Activated T-helper 2 cell treated with anti-CD3 and anti-CD28 coated beads, Interferon-gamma antibody, Interleukin-2, Interleukin-4, amounts not matched to agents 10 μg/mL and 5 μg/mL and 100 μg/mL, durations not matched to agents 14 hours and 24 hours and 36 hours (primary cell): ENCODE measurements at regions of chr11 and their contacts with region 1.

Region 1: GRCh38 chr11:33015621-33016551 is at the start of gene DEPDC7:
- DNase-seq: peak; percentile 66
- H3K4me3 Mint-ChIP-seq: peak within 1 kb of the TSS; percentile 76
- H3K27ac Mint-ChIP-seq: no peak within 1 kb of the TSS
- H3K4me1 Mint-ChIP-seq: peaks cover 17% of the 10 kb centered on the region
- H3K27me3 Mint-ChIP-seq: peaks cover 56% of the 10 kb centered on the region
- total RNA-seq, gene DEPDC7: 0.57 and 0.82 TPM in 2 replicates

Region 2: DNA sequence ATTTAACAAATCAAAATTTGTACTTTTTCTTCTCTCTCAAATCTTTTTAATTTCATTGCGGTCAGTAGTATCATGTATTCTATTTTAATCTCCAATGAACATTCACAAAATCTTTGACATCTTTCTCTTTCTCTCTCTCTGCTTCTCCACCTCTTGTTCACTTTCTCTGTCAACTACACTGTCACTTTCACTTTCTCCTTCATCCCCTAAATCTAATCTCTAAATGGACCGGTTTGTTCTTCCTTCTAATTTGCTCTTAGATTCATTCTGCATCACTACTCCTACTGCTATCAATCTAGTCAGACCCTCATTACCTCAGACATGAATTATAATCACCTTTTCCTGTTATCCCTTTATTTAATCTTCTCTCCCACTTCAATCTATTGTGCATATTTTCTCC is 240.0 kb before region 1 on chr11:
- intact Hi-C with region 1: no loop called
- DNase-seq: no peak
- H3K4me3 Mint-ChIP-seq: no peak overlapping the region
- H3K27ac Mint-ChIP-seq: no peak overlapping the region
- H3K4me1 Mint-ChIP-seq: peaks cover 10% of the 10 kb centered on the region
- H3K27me3 Mint-ChIP-seq: no peaks in the 10 kb centered on the region

Region 3: DNA sequence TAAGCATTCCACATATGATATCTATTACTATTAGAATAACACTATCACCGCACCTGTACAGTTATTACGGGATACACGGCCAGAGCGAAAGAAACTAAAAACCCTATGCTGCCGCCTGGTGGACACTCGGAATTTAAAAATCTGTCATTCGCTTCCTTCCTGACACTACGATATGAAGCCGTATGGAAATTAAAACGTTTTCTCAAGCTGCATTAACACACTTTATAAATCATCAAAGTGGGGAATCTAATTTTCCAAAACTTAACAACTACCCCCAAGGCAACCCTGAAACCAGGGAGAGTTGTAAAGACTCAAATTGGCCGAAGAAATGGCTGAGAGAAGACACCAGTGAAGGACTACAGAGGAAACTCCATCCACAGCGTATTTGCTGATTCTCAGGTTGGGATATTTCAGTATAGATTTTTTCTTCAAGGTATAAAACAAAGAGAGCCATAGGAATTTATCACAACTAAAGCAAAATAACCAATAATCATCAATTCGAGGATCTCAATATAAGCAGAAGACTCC is 222.9 kb before region 1 on chr11:
- intact Hi-C with region 1: no loop called
- DNase-seq: peak; percentile 49
- H3K4me3 Mint-ChIP-seq: peak overlapping the region; percentile 13
- H3K27ac Mint-ChIP-seq: no peak overlapping the region
- H3K4me1 Mint-ChIP-seq: peaks cover 3% of the 10 kb centered on the region
- H3K27me3 Mint-ChIP-seq: peaks cover 27% of the 10 kb centered on the region

Region 4: GRCh38 chr11:32960553-32961164 is 55.2 kb before region 1 on chr11:
- intact Hi-C with region 1: loop called (anchors 2 kb)
- DNase-seq: no peak
- H3K4me3 Mint-ChIP-seq: no peak overlapping the region
- H3K27ac Mint-ChIP-seq: no peak overlapping the region
- H3K4me1 Mint-ChIP-seq: peaks cover 11% of the 10 kb centered on the region
- H3K27me3 Mint-ChIP-seq: no peaks in the 10 kb centered on the region

Region 5: GRCh38 chr11:33039274-33040032 is 23.6 kb after region 1 on chr11 and contains the start of gene TCP11L1:
- intact Hi-C with region 1: loop called (anchors 1 kb)
- DNase-seq: peak; percentile 74
- H3K4me3 Mint-ChIP-seq: peak within 1 kb of the TSS; percentile 91
- H3K27ac Mint-ChIP-seq: peak within 1 kb of the TSS; percentile 93
- H3K4me1 Mint-ChIP-seq: peaks cover 36% of the 10 kb centered on the region
- H3K27me3 Mint-ChIP-seq: peaks cover 18% of the 10 kb centered on the region
- total RNA-seq, gene TCP11L1: 12.4 and 13.8 TPM in 2 replicates

Region 6: DNA sequence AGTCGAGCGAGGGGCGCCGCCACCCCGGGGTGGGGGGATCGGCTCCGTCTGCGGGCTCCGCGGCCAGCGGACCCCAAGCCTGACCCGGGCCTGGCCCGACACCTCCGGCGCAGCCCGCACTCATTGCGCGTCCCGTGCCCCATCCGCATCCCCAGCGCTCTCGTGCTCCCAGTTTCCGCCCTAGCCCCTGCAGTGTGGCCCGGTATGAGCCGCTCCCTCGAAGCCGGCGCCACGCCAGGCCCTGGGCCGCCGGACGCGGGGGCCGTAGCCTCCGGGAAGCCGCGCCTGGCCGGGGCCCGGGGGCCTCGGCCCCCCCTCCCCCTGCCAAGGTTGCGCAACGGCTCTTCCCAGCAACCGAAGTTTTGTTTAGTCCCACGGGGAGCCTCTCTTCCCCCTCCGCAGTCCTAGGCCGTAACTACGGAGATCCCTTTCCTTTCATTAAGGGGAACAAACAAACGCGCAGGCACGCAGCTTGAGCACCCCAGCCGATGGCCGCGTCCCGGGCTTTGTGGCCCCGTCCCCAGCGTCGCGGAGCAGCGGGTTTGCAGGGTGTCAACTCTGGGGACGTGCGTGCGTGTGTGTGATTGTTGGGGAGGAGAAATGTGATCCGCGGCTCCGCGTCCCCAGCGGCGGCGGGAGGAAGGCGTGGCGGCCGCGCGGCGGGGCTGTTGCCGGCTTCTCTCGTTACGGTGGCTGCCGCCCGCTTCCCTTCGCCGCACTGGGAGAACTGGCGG is 242.2 kb after region 1 on chr11:
- intact Hi-C with region 1: loop called (anchors 10 kb)
- DNase-seq: peak; percentile 75
- H3K4me3 Mint-ChIP-seq: peak overlapping the region; percentile 86
- H3K27ac Mint-ChIP-seq: peak overlapping the region; percentile 99
- H3K4me1 Mint-ChIP-seq: peaks cover 32% of the 10 kb centered on the region
- H3K27me3 Mint-ChIP-seq: no peaks in the 10 kb centered on the region